Activated CD8-positive, alpha-beta T cell treated with anti-CD3 and anti-CD28 coated beads for 36 hours (primary cell): ENCODE measurements at regions of chr17 and their contacts with region 1.

Region 1: GRCh38 chr17:64129764-64130558 is at the start of gene ERN1:
- DNase-seq: peak; percentile 92
- ATAC-seq: peak; percentile 89
- H3K4me3 Mint-ChIP-seq: peak within 1 kb of the TSS; percentile 93
- H3K27ac Mint-ChIP-seq: peak within 1 kb of the TSS; percentile 97
- H3K4me1 Mint-ChIP-seq: peaks cover 40% of the 10 kb centered on the region
- H3K27me3 Mint-ChIP-seq: no peaks in the 10 kb centered on the region
- CTCF ChIP-seq: no peak
- total RNA-seq, gene ERN1: 19.2 to 23.6 TPM

Region 2: DNA sequence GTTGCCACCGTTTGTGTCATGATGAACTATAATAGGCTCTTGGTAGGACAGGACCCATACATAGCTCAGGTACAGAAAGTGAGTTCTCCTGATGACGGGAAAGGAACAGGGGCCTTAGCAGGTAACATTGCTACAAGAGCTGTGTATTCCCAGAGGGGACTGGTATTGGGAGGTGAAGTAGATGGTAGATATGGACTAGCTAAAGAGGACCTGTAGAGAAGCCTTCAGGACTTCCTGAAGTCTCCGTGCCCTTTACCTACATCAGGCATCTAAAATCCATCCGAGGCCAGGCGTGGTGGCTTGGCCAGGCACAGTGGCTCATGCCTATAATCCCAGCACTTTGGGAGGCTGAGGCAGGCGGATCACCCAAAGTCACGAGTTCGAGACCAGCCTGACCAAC is 274.8 kb before region 1 on chr17:
- CTCF ChIA-PET with region 1: no interaction called
- POLR2A ChIA-PET with region 1: no interaction called
- intact Hi-C with region 1: no loop called
- DNase-seq: no peak
- ATAC-seq: no peak
- H3K4me3 Mint-ChIP-seq: no peak overlapping the region
- H3K27ac Mint-ChIP-seq: no peak overlapping the region
- H3K4me1 Mint-ChIP-seq: no peaks in the 10 kb centered on the region
- H3K27me3 Mint-ChIP-seq: no peaks in the 10 kb centered on the region
- CTCF ChIP-seq: no peak

Region 3: GRCh38 chr17:63911657-63912426 is 218.1 kb before region 1 on chr17:
- CTCF ChIA-PET with region 1: interaction called, 27 read pairs
- POLR2A ChIA-PET with region 1: interaction called, 3 read pairs
- intact Hi-C with region 1: loop called (anchors 5 kb)
- DNase-seq: peak; percentile 80
- ATAC-seq: peak; percentile 95
- H3K4me3 Mint-ChIP-seq: no peak overlapping the region
- H3K27ac Mint-ChIP-seq: no peak overlapping the region
- H3K4me1 Mint-ChIP-seq: no peaks in the 10 kb centered on the region
- H3K27me3 Mint-ChIP-seq: no peaks in the 10 kb centered on the region
- CTCF ChIP-seq: peak; percentile 88

Region 4: DNA sequence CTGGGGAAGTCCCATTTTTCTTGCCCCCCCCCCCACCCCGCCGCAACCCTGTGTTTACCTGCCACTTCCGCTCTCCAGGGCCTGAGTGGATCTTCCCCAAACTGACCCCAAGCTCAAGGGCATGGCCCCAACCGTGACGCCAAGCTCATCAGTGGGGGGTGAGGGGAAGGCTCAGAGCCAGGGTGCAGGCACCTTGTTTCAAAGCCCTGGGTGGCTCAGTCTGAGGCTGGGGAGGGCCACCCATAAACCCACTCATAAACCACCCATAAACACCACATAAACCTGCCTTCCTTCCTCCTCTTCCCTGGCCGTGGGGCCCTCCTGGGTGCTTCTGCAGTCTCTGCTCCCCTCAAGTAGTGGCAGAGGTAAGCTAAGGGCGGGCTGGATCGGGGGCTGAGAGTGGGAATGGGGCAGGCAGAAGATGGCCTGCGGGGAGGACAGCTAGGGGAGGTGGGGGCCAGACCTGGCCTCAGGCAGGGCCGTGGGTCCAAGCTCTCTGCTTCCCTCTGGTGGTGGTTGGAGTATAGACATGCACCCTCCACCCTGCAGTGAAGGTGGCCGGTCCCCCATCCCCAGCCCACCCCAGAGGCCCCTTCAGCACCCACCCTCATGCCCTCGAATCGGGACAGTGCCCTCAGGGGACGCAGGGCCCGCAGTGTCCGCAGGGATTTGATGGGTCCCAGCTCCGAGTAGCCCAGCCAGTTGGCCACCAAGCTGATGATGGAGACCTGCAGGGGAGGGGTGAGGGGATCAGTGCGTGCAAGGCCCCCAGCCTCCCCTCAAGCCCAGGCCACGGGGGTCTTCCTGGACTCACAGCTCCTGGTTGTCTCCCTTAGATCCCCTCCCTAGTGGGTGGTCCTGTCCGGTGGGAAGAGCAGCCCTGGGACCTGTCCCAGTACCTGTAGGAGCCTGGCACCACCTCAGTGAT is 183.3 kb before region 1 on chr17:
- CTCF ChIA-PET with region 1: interaction called, 12 read pairs
- POLR2A ChIA-PET with region 1: no interaction called
- intact Hi-C with region 1: no loop called
- DNase-seq: peak; percentile 74
- ATAC-seq: peak; percentile 92
- H3K4me3 Mint-ChIP-seq: peak overlapping the region; percentile 50
- H3K27ac Mint-ChIP-seq: peak overlapping the region; percentile 77
- H3K4me1 Mint-ChIP-seq: peaks cover 20% of the 10 kb centered on the region
- H3K27me3 Mint-ChIP-seq: no peaks in the 10 kb centered on the region
- CTCF ChIP-seq: peak; percentile 89

Region 5: DNA sequence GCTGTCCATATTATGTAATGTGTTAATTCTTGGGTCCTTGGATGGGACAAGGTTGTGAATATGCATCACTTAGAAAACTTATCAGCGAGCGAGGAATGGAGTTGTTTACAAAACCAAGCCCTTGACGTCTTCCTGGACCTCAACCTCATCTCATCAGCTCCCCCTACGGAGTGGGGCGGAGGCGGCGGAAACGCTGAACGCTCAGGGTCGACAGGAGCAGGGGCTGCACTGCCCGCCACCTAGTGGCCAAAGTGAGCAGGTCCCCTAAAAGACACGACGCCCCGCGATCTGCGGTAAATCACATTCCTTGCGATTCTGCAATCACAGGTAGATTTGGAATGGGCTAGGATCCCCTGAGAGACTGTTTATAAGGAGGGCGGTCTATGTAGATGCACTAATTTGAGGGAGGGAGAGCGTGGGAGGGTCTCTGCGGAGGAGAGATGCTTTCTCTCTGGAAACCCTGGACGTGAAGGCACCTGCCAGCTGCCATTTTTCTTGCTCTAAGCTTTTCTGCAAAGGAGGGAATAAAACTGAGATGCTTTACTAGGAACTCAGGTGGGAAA is 104.1 kb before region 1 on chr17:
- CTCF ChIA-PET with region 1: interaction called, 419 read pairs
- POLR2A ChIA-PET with region 1: interaction called, 13 read pairs
- intact Hi-C with region 1: loop called (anchors 1 kb)
- DNase-seq: peak; percentile 96
- ATAC-seq: peak; percentile 77
- H3K4me3 Mint-ChIP-seq: peak overlapping the region; percentile 65
- H3K27ac Mint-ChIP-seq: peak overlapping the region; percentile 85
- H3K4me1 Mint-ChIP-seq: peaks cover 58% of the 10 kb centered on the region
- H3K27me3 Mint-ChIP-seq: no peaks in the 10 kb centered on the region
- CTCF ChIP-seq: peak; percentile 97

Region 6: GRCh38 chr17:64056269-64057005 is 73.5 kb before region 1 on chr17:
- CTCF ChIA-PET with region 1: interaction called, 228 read pairs
- POLR2A ChIA-PET with region 1: interaction called, 6 read pairs
- intact Hi-C with region 1: loop called (anchors 5 kb)
- DNase-seq: no peak
- ATAC-seq: peak; percentile 32
- H3K4me3 Mint-ChIP-seq: no peak overlapping the region
- H3K27ac Mint-ChIP-seq: peak overlapping the region; percentile 71
- H3K4me1 Mint-ChIP-seq: peaks cover 38% of the 10 kb centered on the region
- H3K27me3 Mint-ChIP-seq: no peaks in the 10 kb centered on the region
- CTCF ChIP-seq: no peak

Region 7: GRCh38 chr17:64081802-64082799 is 47.9 kb before region 1 on chr17:
- CTCF ChIA-PET with region 1: interaction called, 48 read pairs
- POLR2A ChIA-PET with region 1: interaction called, 10 read pairs
- intact Hi-C with region 1: no loop called
- DNase-seq: peak; percentile 63
- ATAC-seq: peak; percentile 88
- H3K4me3 Mint-ChIP-seq: peak overlapping the region; percentile 45
- H3K27ac Mint-ChIP-seq: no peak overlapping the region
- H3K4me1 Mint-ChIP-seq: peaks cover 20% of the 10 kb centered on the region
- H3K27me3 Mint-ChIP-seq: no peaks in the 10 kb centered on the region
- CTCF ChIP-seq: peak; percentile 36

Region 8: DNA sequence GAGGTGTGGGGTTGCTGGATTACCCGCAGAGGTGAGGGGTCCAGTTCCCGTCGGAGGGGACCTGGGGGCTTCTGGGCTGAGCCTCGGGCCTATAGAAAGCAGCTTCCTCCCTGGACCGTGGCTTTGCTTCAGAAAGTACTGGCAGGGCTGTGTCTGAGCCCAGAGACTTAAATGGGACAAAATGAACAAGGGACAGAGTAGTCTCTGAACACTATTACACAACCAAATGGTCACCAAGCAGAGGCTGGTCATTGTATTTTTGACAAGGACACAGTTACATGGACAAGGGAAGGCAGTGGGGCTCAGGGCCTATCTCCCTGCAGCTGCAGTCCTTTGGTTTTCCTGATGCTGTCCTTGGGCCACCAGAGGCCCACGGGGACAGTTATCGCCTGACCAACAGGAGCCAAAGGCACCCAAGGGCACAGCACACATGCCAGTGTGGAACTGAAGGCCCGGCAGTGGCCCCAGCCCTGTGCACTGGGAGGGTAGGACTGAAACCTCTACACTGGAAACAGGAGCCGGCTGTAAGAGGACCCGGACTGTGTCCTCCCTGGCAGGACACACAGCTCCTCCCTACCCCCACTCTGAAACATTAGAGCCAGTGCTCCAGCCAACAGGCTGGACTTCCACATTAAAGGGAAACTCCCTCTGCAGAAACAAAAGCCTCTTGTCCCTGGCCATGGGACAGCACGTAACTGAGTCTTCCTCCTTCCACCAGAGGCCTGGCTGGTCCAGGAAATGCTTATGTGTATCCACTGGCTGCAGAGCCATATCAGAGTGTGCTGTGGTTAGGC is 26.0 kb after region 1 on chr17:
- CTCF ChIA-PET with region 1: interaction called, 11 read pairs
- POLR2A ChIA-PET with region 1: no interaction called
- intact Hi-C with region 1: no loop called
- DNase-seq: no peak
- ATAC-seq: no peak
- H3K4me3 Mint-ChIP-seq: no peak overlapping the region
- H3K27ac Mint-ChIP-seq: no peak overlapping the region
- H3K4me1 Mint-ChIP-seq: no peaks in the 10 kb centered on the region
- H3K27me3 Mint-ChIP-seq: no peaks in the 10 kb centered on the region
- CTCF ChIP-seq: no peak

Region 9: DNA sequence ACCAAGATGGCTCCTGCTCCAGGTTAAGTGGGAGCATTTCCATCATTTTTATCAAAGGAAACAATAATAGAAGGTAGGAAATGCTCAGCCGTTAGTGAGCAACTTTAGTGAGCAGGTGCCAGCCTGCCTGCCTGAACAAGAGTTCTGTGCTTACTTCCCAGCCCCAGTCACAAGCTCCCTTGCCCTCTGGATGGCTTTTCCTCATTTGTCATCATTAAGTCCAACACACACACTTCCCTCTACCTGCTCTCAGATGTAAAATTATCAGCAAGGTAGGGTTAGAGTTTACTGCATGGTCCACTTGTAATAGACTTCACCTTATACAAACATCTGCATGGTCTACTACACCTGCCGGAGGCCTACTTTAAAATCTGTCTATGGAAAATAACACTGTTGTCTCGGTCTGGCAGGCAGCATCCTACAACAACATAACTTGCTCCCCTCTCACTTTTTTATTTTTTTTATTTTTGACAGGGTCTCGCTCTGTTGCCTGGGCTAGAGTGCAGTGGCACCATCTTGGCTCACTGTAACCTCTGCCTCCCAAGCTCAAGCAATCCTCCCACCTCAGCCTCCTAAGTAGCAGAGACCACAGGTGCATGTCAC is 120.4 kb after region 1 on chr17:
- CTCF ChIA-PET with region 1: no interaction called
- POLR2A ChIA-PET with region 1: no interaction called
- intact Hi-C with region 1: no loop called
- DNase-seq: no peak
- ATAC-seq: no peak
- H3K4me3 Mint-ChIP-seq: no peak overlapping the region
- H3K27ac Mint-ChIP-seq: no peak overlapping the region
- H3K4me1 Mint-ChIP-seq: peaks cover 4% of the 10 kb centered on the region
- H3K27me3 Mint-ChIP-seq: no peaks in the 10 kb centered on the region
- CTCF ChIP-seq: no peak

Region 10: GRCh38 chr17:64572638-64573154 is 442.7 kb after region 1 on chr17:
- CTCF ChIA-PET with region 1: no interaction called
- POLR2A ChIA-PET with region 1: no interaction called
- intact Hi-C with region 1: no loop called
- DNase-seq: peak; percentile 14
- ATAC-seq: peak; percentile 92
- H3K4me3 Mint-ChIP-seq: no peak overlapping the region
- H3K27ac Mint-ChIP-seq: peak overlapping the region; percentile 81
- H3K4me1 Mint-ChIP-seq: peaks cover 11% of the 10 kb centered on the region
- H3K27me3 Mint-ChIP-seq: no peaks in the 10 kb centered on the region
- CTCF ChIP-seq: no peak